ENCODE measurements at regions of chr22 and their contacts with region 1.

Region 1: DNA sequence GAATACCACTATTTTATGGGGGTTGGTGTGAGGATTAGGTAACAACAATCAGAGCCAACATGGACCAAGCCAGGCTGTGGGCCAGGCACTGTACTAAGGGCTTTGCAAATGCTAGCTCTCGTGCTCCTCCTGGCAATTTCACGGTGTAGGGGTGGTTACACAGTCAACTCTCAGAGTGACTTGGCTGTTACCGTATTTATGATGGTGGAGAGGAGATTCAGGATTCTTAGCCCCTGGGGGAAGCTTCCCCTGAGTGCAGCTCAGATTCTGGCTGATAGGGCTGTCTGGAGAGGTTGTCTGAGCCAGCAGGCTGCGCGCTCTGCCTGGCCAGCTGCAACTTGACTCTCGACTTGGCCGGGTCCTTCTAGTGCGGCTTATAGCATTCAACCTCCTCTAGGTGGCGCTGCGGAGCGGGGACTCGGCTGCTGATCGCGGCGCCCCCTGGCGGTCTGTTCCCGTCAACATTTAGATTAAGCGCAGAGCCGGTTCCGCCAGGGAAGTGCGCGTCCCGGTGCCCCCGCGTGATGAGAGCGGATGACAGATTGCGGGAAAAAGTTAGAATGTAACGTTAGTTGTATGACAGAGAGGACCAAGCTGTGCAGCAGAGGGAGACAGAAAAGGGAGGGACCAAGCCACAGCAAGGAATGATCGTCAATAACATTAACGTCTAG is 4.5 kb upstream of the NCF4 start:
- DNase-seq: peak; percentile 97

Region 2: GRCh38 chr22:36409911-36410756 is 446.1 kb before region 1 on chr22:
- intact Hi-C with region 1: no loop called
- DNase-seq: peak; percentile 93

Region 3: GRCh38 chr22:36546092-36546804 is 310.0 kb before region 1 on chr22:
- intact Hi-C with region 1: loop called (anchors 2 kb)
- DNase-seq: no peak

Region 4: DNA sequence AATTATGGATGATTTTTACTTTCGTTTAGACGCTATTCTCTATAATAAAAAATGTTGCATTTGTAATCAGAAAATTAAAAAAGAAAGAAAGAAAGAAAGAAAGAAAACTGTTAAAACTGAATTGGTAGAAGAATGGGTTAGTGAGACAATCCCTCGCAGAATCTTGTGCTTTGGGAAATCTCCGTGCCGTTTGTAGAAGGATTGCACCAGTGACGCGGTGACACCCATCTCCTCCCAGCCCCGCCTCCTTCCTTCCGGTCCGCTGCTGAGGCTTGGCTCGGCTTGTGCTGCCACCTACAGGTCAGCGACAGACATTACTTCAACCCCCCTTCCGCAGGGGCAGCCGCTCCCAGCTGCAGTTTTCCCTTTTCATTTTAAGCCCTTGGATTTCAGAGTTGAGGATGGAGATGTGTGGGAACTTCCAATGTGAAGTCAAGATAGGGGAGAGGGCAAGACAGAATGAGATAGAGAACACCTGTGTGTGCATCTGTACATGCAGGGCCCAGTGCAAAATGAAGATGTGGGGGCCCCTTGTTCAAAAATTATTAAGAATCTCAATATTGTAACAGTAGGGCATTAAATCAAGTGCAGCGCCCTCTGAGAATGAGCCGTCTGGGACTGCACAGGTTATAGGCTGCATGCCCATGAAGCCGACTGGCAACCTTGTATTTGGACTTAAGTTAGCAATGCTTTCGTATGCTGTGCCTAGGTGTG is 121.8 kb after region 1 on chr22:
- intact Hi-C with region 1: loop called (anchors 5 kb)
- DNase-seq: peak; percentile 97

Measured in cardiac septum (tissue), 1 donor.